IMR-90 (cell line): ENCODE measurements at regions of chr11 and their contacts with region 1.

Region 1: DNA sequence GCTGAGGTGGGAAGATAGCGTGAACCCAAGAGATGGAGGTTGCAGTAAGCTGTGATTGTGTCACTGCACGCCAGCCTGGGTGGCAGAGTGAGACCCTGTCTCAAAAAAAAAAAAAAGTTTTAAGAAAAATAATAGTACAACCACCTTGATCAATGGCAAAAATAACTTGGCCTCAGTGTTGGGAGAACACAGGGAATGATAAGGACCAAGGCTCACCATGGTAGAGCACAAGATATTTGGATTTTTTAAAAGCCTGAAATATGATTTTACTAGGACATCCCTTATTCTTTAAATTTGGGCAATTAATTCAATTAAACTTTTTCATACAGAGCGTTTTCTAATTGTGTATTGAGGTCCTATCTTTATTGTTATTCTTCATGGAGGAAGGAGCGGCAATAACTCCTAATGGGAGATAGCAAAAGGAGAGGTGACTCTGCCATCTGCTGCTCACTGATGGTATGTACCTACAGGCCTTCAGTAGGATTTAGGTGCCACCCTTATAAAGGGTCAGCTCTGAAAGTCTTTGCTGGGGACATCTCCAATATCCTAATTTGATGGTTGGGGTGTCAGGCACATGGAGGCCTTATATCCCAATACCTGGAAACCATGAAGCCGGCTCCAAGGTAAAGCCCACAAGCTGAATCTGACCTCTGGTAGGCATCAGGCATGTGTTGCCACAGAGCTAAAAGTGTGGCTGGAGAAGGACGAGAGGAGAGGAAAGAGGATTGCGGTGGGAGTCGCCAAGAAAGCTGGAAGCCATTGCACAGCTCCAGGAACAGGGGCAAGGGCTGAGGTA is 21.9 kb upstream of the POLD3 start:
- DNase-seq: peak; percentile 53
- ATAC-seq: peak; percentile 89
- H3K4me3 ChIP-seq: no peak overlapping the region
- H3K27ac ChIP-seq: no peak overlapping the region
- H3K4me1 ChIP-seq: no peaks in the 10 kb centered on the region
- H3K27me3 ChIP-seq: peaks cover 16% of the 10 kb centered on the region
- CTCF ChIP-seq: peak; percentile 69
- POLR2A ChIP-seq: 0 out of 2 replicates have a peak, but pooled peaks have one; percentile 29
- RAD21 ChIP-seq: peak; percentile 86

Region 2: DNA sequence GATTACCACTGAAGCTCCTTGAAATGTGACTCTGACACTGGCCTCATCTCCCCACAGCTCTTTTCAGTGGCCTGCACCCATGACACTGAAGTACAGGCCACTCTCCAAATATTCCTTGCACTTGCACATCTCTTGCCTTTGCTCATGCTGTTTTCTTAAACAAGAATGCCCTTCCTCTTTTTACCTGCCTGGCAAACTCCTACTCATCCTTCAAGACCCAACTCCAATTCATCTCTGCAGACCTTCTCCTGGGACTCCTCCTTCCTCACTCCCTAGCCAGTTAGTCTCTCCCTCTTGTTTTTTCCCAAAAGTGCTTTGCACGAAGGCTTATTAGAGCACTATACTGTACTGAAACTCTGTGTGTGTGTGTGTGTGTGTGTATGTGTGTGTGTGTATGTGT is 105.7 kb before region 1 on chr11:
- CTCF ChIA-PET with region 1: no interaction called
- POLR2A ChIA-PET with region 1: no interaction called
- dilution Hi-C with region 1: no loop called
- in situ Hi-C with region 1: no loop called
- intact Hi-C with region 1: no loop called
- DNase-seq: no peak
- ATAC-seq: no peak
- H3K4me3 ChIP-seq: no peak overlapping the region
- H3K27ac ChIP-seq: no peak overlapping the region
- H3K4me1 ChIP-seq: peaks cover 4% of the 10 kb centered on the region; the same call in 1 of the 2 replicates
- H3K27me3 ChIP-seq: peaks cover 55% of the 10 kb centered on the region
- CTCF ChIP-seq: no peak
- POLR2A ChIP-seq: no peak
- RAD21 ChIP-seq: no peak

Region 3: GRCh38 chr11:74492974-74493790 is 77.3 kb before region 1 on chr11 and contains the start of gene LIPT2:
- CTCF ChIA-PET with region 1: no interaction called
- POLR2A ChIA-PET with region 1: interaction called, 11 read pairs
- dilution Hi-C with region 1: no loop called
- in situ Hi-C with region 1: no loop called
- intact Hi-C with region 1: no loop called
- DNase-seq: peak; percentile 95
- ATAC-seq: peak; percentile 99
- H3K4me3 ChIP-seq: peak within 1 kb of the TSS; percentile 77
- H3K27ac ChIP-seq: peak within 1 kb of the TSS; percentile 67
- H3K4me1 ChIP-seq: no peaks in the 10 kb centered on the region
- H3K27me3 ChIP-seq: no peaks in the 10 kb centered on the region
- CTCF ChIP-seq: no peak
- POLR2A ChIP-seq: peak; percentile 32; the same call in 1 of the 2 replicates
- RAD21 ChIP-seq: no peak
- total RNA-seq, gene LIPT2: 2.2 and 2.9 TPM in 2 replicates